ENCODE measurements at regions of chr20 and their contacts with region 1.

Region 1: DNA sequence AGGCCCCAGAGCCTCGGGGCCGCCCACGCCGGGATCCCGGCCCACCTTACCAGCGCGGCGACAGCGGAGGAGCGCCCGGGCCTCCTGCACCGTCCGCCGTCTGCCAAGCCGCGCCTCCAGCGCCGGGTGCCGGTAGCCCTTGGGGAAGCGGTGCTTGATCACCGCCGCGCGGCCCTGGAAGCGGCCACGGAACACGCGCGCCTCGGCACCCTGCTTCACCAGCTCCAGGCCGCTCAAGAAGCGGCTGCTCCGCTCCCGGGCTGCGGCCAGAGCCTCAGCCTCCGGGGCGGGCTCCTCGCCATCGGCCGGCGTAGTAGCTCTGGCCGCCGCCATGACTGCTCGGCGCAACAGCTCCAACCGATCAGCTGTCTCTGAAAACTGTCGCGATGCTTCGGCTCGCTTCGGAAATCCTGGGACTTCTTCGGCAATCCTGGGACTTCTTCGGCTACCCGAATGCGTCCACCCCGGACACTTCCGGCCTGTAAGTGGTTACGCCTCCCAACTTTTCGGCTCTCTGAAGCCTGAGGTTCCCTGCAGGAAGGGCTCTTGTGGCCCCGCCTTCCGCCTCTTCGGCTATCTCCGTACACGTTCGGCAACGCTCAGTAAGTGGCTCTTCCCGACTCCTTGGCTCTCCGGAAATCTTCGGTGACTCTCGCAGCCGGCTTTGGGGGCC is at the start of gene TP53RK:
- DNase-seq: peak; percentile 100
- ATAC-seq: peak; percentile 96
- H3K4me3 ChIP-seq: peak within 1 kb of the TSS; percentile 70
- H3K27ac ChIP-seq: peak within 1 kb of the TSS; percentile 82
- H3K4me1 ChIP-seq: peaks cover 3% of the 10 kb centered on the region; the same call in 1 of the 2 replicates
- H3K27me3 ChIP-seq: no peaks in the 10 kb centered on the region
- CTCF ChIP-seq: 0 out of 2 replicates have a peak, but pooled peaks have one; percentile 22
- POLR2A ChIP-seq: peak; percentile 96
- RAD21 ChIP-seq: no peak
- total RNA-seq, gene TP53RK: 10.6 and 16.1 TPM in 2 replicates

Region 2: DNA sequence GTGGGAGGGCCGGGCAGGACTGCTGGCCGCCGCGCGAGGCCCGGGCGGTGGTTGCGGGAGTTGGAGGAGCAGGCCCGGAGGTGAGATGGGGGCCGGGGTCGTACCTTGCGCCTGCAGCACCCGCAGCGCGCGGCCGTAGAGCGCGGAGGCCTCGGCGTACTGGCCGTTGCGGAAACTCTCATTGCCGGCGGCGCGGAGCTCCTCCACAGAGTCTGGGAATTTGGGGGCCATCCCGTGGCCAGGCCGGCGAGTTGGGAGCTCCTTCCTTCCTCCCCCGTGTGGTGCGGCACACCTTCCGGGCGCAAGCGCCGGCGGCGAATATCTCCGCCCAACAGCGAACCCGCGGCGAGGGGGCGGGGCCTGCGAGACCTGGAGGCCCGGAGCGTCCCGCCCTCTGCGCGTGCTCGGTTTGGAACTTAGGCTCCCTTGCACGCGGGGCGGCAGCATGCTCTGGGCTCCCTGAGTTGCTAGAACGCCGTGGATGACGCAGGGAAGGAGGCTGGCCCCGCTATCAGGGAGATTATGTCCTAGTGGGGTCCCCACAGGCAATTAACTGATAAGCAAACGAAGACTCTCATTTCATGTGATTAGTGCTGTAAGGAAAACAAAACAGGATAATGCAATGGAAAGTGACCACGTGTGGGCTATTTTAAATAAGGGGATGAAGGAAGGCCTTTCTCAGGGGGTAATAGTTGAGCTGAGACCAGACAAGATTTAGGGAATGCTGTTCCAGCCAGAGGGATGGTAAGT is 1728.9 kb before region 1 on chr20 and contains the start of gene TOMM34:
- CTCF ChIA-PET with region 1: no interaction called
- POLR2A ChIA-PET with region 1: no interaction called
- dilution Hi-C with region 1: no loop called
- in situ Hi-C with region 1: no loop called
- intact Hi-C with region 1: loop called (anchors 5 kb)
- DNase-seq: peak; percentile 90
- ATAC-seq: peak; percentile 95
- H3K4me3 ChIP-seq: peak within 1 kb of the TSS; percentile 82
- H3K27ac ChIP-seq: peak within 1 kb of the TSS; percentile 65
- H3K4me1 ChIP-seq: peaks cover 5% of the 10 kb centered on the region
- H3K27me3 ChIP-seq: no peaks in the 10 kb centered on the region
- CTCF ChIP-seq: no peak
- POLR2A ChIP-seq: peak; percentile 90; the same call in 1 of the 2 replicates
- RAD21 ChIP-seq: no peak
- total RNA-seq, gene TOMM34: 82.8 and 97.5 TPM in 2 replicates